ENCODE measurements at regions of chrX and their contacts with region 1.

Region 1: DNA sequence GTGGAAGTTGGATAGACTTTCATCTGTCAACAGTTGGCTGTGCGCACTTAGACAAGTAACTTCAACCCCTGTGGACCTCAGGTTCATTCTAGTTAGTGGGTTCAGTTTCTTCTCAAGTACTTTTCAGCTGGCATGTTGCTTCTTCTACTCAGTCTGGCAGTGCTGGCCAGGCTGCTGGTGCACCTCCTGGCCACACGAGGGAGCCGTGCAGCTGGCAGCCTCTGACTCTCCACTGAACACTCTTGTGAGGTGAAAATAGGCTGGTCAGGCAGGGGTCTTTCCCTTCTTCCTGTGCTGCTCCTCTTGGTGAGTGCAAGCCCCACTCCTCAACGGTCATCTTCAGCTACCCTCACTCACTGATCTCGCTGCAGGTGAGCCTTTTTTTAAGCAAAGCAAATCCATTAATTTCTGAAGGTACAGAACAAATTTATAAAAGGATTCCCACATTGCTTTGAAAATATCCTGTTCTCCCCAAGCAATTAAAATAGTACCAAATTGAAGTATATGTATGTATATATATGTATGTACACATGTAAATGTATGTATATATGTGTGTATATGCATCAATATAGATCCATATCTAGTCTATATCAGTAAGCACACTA is 30.6 kb downstream of the LONRF3 start:
- DNase-seq: peak; percentile 44 to 48
- ATAC-seq: peak; percentile 93 to 97
- H3K4me3 ChIP-seq: no peak overlapping the region
- H3K27ac ChIP-seq: no peak overlapping the region
- H3K4me1 ChIP-seq: no peaks in the 10 kb centered on the region
- CTCF ChIP-seq: peak; percentile 63
- EP300 ChIP-seq: no peak
- POLR2A ChIP-seq: no peak
- RAD21 ChIP-seq: peak; percentile 56 to 62

Region 2: GRCh38 chrX:118847676-118848075 is 157.3 kb before region 1 on chrX:
- CTCF ChIA-PET with region 1: interaction called, 11 read pairs
- POLR2A ChIA-PET with region 1: interaction called, 3 read pairs
- DNase-seq: peak; percentile 49 to 51
- ATAC-seq: peak; percentile 71 to 81
- H3K4me3 ChIP-seq: no peak overlapping the region
- H3K27ac ChIP-seq: no peak overlapping the region
- H3K4me1 ChIP-seq: no peaks in the 10 kb centered on the region
- CTCF ChIP-seq: peak; percentile 70
- EP300 ChIP-seq: no peak
- POLR2A ChIP-seq: no peak
- RAD21 ChIP-seq: peak; percentile 83 to 86

Region 3: DNA sequence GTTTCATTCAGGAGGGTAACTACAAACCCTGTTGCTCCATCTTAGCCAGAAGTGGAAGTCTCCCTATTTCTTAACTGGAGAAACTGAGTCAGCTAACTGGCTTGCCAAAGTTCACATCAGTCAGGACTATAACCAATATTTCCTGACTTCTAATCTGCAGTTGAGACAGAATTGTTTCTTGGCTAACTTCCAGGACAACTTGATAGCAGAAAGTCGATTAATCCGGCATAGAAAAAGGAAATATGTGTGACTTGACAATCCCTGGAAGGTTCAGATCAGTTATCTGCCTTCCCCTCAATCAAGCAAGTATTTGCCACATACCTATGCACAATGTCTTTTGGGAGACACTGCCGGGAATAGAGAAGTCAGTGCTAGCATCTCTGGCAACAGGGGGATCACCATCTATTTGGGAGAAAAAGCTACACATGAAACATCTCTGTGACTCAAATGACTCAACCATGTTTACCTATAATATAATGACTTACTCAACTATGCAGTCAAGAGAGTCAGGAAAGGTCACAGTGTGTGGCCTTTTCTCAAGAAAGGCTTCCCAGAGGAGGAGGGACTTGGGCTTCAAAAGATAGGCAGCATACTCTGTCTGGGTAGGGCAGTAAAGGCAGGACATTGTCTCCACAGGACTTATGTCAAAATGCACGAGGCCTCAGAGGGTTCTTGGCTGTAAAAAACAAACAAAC is 43.0 kb before region 1 on chrX:
- CTCF ChIA-PET with region 1: no interaction called
- POLR2A ChIA-PET with region 1: no interaction called
- DNase-seq: peak in 1 of 2 experiments; percentile 25
- ATAC-seq: peak in 1 of 2 experiments; percentile 24; a peak in 2 of 6 replicates
- H3K4me3 ChIP-seq: no peak overlapping the region
- H3K27ac ChIP-seq: no peak overlapping the region
- H3K4me1 ChIP-seq: peaks cover 10% of the 10 kb centered on the region
- CTCF ChIP-seq: no peak
- EP300 ChIP-seq: no peak
- POLR2A ChIP-seq: no peak
- RAD21 ChIP-seq: no peak

Region 4: DNA sequence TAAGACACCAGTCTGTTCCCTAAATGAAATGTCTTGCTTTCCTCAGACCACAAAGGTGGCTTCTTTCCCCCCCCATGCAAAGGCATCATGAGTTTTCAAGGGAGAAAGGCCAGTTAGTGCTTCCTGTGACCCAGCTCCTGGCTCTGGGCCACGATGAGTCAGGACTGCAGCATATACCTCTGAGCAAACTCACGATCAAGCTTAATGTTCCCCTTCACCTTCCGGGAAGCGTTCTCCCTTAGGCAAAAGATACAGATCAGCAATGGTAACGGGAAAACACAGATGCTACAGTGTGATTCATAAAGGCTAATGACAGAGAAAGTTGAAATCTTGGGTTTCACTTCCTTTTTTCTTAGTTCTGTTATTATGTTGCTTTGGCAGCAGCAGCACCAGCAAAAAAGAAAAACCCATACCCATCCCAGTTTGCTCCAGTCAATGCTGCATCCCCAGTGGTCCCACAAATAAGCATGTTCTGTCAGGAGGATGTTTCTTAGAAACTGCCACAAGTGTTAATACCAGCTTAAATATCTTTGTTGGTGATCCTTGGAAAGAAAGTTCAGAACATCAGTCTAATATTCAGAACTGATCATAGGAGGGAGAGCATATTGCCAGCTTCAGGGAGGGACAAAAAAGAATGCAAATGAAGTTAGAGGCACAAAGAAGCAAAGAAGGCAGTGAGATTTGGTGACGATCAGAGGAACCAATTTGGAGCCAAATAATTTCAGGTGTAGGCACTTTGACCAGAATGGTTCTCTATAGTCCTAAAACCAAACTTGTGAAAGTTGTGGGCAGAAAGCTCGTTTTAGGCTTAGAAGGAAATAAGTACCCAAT is 10.6 kb after region 1 on chrX:
- CTCF ChIA-PET with region 1: interaction called, 17 read pairs
- POLR2A ChIA-PET with region 1: no interaction called
- DNase-seq: peak; percentile 14 to 81
- ATAC-seq: peak; percentile 97 to 98
- H3K4me3 ChIP-seq: no peak overlapping the region
- H3K27ac ChIP-seq: peak overlapping the region; percentile 35 to 66; a peak in 4 of 6 replicates
- H3K4me1 ChIP-seq: peaks cover 13% of the 10 kb centered on the region
- CTCF ChIP-seq: no peak
- EP300 ChIP-seq: no peak
- POLR2A ChIP-seq: no peak
- RAD21 ChIP-seq: no peak

Region 5: DNA sequence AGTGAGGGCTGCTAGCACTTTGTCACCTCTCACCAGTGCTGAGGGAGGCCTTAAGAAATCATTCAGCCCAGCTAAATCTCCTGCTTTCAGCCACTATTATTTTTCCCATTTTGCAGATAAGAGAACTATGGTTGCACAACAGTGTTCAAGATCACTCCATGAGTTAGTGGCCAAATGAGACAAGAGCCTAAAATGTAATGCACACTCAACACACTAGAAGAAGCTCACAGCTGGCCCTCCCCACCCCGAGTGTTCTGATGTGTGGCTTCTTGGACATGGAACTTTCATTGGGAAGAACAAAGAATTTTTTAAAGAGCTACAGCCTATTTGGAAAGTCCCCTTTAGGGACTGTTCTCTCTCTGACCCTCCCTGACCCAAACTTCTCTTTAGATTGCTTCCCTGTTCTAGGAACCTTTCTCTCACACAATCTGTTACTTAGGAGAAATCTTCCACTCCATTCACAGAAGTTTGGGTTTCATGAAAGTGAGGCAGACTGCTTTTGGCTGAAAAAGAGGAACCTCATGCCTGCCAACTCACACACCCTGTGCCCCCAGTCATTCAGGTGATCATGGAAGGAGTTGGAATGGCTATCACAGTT is 23.8 kb after region 1 on chrX:
- CTCF ChIA-PET with region 1: interaction called, 19 read pairs
- POLR2A ChIA-PET with region 1: no interaction called
- DNase-seq: no peak
- ATAC-seq: no peak
- H3K4me3 ChIP-seq: no peak overlapping the region
- H3K27ac ChIP-seq: no peak overlapping the region
- H3K4me1 ChIP-seq: no peaks in the 10 kb centered on the region
- CTCF ChIP-seq: no peak
- EP300 ChIP-seq: no peak
- POLR2A ChIP-seq: no peak
- RAD21 ChIP-seq: no peak

Region 6: GRCh38 chrX:119067023-119067739 is 62.2 kb after region 1 on chrX:
- CTCF ChIA-PET with region 1: interaction called, 31 read pairs
- POLR2A ChIA-PET with region 1: no interaction called
- DNase-seq: peak; percentile 46 to 50
- ATAC-seq: peak; percentile 76 to 90
- H3K4me3 ChIP-seq: no peak overlapping the region
- H3K27ac ChIP-seq: no peak overlapping the region
- H3K4me1 ChIP-seq: no peaks in the 10 kb centered on the region
- CTCF ChIP-seq: peak; percentile 75
- EP300 ChIP-seq: no peak
- POLR2A ChIP-seq: no peak
- RAD21 ChIP-seq: peak; percentile 82 to 87